Naive thymus-derived CD4-positive, alpha-beta T cell (primary cell): ENCODE measurements at regions of chr2 and their contacts with region 1.

Region 1: GRCh38 chr2:28392297-28393113 is at the start of gene FOSL2:
- DNase-seq: peak; percentile 87 to 98 (median 92)
- ATAC-seq: peak; percentile 85
- H3K4me3 ChIP-seq: peak within 1 kb of the TSS; percentile 92
- H3K4me3 Mint-ChIP-seq: peak within 1 kb of the TSS in 7 of 10 donors; percentile 86 to 99 (median 91)
- H3K27ac ChIP-seq: peak within 1 kb of the TSS; percentile 88
- H3K27ac Mint-ChIP-seq: peak within 1 kb of the TSS in 8 of 9 donors; percentile 92 to 98 (median 98)
- H3K4me1 ChIP-seq: peaks cover 16 to 18% of the 10 kb centered on the region in 2 donors
- H3K4me1 Mint-ChIP-seq: peaks cover 6 to 45% (median 21%) of the 10 kb centered on the region in 7 donors
- H3K27me3 ChIP-seq: no peaks in the 10 kb centered on the region
- H3K27me3 Mint-ChIP-seq: no peaks in the 10 kb centered on the region
- total RNA-seq, gene FOSL2: 0.81 to 251 (median 33.9) TPM

Region 2: GRCh38 chr2:27703638-27704341 is 688.7 kb before region 1 on chr2:
- CTCF ChIA-PET with region 1: interaction called, 3 read pairs
- POLR2A ChIA-PET with region 1: no interaction called
- intact Hi-C with region 1: loop called in 1 of 2 experiments (anchors 1 kb)
- DNase-seq: peak; percentile 59 to 83 (median 77)
- ATAC-seq: peak; percentile 94
- H3K4me3 ChIP-seq: no peak overlapping the region
- H3K4me3 Mint-ChIP-seq: no peak overlapping the region
- H3K27ac ChIP-seq: no peak overlapping the region
- H3K27ac Mint-ChIP-seq: peak overlapping the region in 1 of 9 donors; percentile 36
- H3K4me1 ChIP-seq: no peaks in the 10 kb centered on the region
- H3K4me1 Mint-ChIP-seq: peaks cover 0 to 16% (median 4%) of the 10 kb centered on the region in 7 donors
- H3K27me3 ChIP-seq: no peaks in the 10 kb centered on the region
- H3K27me3 Mint-ChIP-seq: no peaks in the 10 kb centered on the region

Region 3: GRCh38 chr2:27890146-27890923 is 502.2 kb before region 1 on chr2 and contains the starts of genes BABAM2 and RBKS:
- CTCF ChIA-PET with region 1: no interaction called
- POLR2A ChIA-PET with region 1: no interaction called
- intact Hi-C with region 1: loop called (anchors 1 kb)
- DNase-seq: peak; percentile 90 to 96 (median 94)
- ATAC-seq: peak; percentile 92
- H3K4me3 ChIP-seq: peak within 1 kb of the TSS; percentile 95
- H3K4me3 Mint-ChIP-seq: peak within 1 kb of the TSS; percentile 96 to 100 (median 98)
- H3K27ac ChIP-seq: peak within 1 kb of the TSS; percentile 99
- H3K27ac Mint-ChIP-seq: peak within 1 kb of the TSS; percentile 95 to 100 (median 100)
- H3K4me1 ChIP-seq: peaks cover 27 to 30% of the 10 kb centered on the region in 2 donors
- H3K4me1 Mint-ChIP-seq: peaks cover 28 to 60% (median 55%) of the 10 kb centered on the region in 7 donors
- H3K27me3 ChIP-seq: no peaks in the 10 kb centered on the region
- H3K27me3 Mint-ChIP-seq: peaks cover 0 to 3% (median 0%) of the 10 kb centered on the region in 5 donors
- total RNA-seq, gene BABAM2: 34.2 to 55.8 (median 40.3) TPM
- total RNA-seq, gene RBKS: 1.5 to 10.8 (median 2.0) TPM

Region 4: GRCh38 chr2:28366496-28367282 is 25.8 kb before region 1 on chr2:
- CTCF ChIA-PET with region 1: no interaction called
- POLR2A ChIA-PET with region 1: interaction called, 3 read pairs
- intact Hi-C with region 1: loop called (anchors 1 kb)
- DNase-seq: peak in 8 of 9 donors; percentile 37 to 70 (median 56)
- ATAC-seq: peak; percentile 92
- H3K4me3 ChIP-seq: peak overlapping the region; percentile 14
- H3K4me3 Mint-ChIP-seq: peak overlapping the region; percentile 75 to 93 (median 88)
- H3K27ac ChIP-seq: no peak overlapping the region
- H3K27ac Mint-ChIP-seq: peak overlapping the region in 8 of 9 donors; percentile 12 to 87 (median 72)
- H3K4me1 ChIP-seq: peaks cover 44 to 47% of the 10 kb centered on the region in 2 donors
- H3K4me1 Mint-ChIP-seq: peaks cover 27 to 62% (median 45%) of the 10 kb centered on the region in 7 donors
- H3K27me3 ChIP-seq: no peaks in the 10 kb centered on the region
- H3K27me3 Mint-ChIP-seq: peaks cover 0 to 12% (median 0%) of the 10 kb centered on the region in 5 donors

Region 5: DNA sequence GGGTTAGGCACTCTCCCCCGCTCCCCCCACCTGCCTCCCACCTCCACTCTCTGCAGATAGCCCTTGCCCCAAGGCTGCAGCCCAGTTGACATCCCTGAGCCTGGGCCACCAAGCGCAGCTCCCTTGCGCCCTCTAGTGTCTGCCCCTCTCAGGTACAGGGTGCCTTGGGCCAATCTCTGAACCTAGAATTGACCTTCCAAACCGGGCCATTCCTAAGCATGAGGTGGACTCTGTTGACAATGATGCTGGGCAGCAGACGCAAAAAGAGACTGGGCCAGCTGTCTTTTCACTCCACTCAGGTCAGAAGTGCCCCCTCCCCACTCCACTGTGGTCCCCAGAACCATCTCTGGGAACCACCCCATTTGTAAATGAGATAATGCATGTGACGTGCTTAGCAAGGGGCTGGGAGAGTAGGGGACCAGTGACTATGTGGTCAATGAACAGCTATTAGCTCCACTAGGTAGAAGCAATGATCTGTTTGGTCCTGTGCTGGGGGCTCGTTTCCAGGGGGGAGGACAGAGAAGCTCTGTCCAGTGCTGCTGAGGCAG is 60.1 kb after region 1 on chr2:
- CTCF ChIA-PET with region 1: no interaction called
- POLR2A ChIA-PET with region 1: no interaction called
- intact Hi-C with region 1: loop called (anchors 1 kb)
- DNase-seq: peak; percentile 42 to 86 (median 65)
- ATAC-seq: peak; percentile 79
- H3K4me3 ChIP-seq: no peak overlapping the region
- H3K4me3 Mint-ChIP-seq: no peak overlapping the region
- H3K27ac ChIP-seq: no peak overlapping the region
- H3K27ac Mint-ChIP-seq: no peak overlapping the region
- H3K4me1 ChIP-seq: no peaks in the 10 kb centered on the region
- H3K4me1 Mint-ChIP-seq: peaks cover 0 to 44% (median 0%) of the 10 kb centered on the region in 7 donors
- H3K27me3 ChIP-seq: no peaks in the 10 kb centered on the region
- H3K27me3 Mint-ChIP-seq: no peaks in the 10 kb centered on the region

Region 6: DNA sequence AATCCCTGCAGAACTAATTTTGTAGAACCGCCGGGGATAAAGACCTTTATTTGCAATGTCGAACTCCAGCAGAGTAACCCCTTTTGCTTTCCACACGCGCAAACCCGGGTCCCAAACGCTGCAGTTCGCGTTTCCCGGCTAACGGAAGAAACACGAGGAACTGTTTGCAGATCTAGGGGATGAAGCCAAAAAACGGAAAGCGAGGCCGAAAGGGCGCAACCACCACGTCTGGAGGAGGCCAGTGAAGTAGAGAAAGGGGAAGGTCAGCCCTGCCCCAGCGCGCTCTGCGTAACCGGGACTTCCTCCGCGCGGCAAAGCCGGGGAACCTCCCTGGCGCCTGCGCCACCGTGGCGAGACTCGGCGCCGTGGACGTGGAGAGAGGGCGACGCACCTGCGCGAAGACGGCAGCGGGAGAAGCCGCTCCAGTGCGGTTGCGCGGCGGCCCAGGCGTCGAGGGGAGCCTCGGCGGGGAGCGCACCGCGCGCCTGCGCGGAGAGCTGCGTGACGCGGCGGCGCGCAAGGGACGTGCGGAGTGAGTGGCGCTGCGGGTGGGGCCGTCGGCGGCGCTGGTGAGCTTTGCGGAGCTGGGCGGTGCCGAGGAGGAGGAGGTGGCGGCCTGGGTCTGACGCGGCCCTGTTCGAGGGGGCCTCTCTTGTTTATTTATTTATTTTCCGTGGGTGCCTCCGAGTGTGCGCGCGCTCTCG is 358.9 kb after region 1 on chr2 and contains the start of gene PPP1CB:
- CTCF ChIA-PET with region 1: no interaction called
- POLR2A ChIA-PET with region 1: no interaction called
- intact Hi-C with region 1: loop called (anchors 1 to 5 kb)
- DNase-seq: peak; percentile 95 to 99 (median 99)
- ATAC-seq: peak; percentile 92
- H3K4me3 ChIP-seq: peak within 1 kb of the TSS; percentile 97
- H3K4me3 Mint-ChIP-seq: peak within 1 kb of the TSS; percentile 93 to 100 (median 96)
- H3K27ac ChIP-seq: peak within 1 kb of the TSS; percentile 99
- H3K27ac Mint-ChIP-seq: peak within 1 kb of the TSS; percentile 96 to 99 (median 98)
- H3K4me1 ChIP-seq: peaks cover 42 to 44% of the 10 kb centered on the region in 2 donors
- H3K4me1 Mint-ChIP-seq: peaks cover 35 to 67% (median 64%) of the 10 kb centered on the region in 7 donors
- H3K27me3 ChIP-seq: no peaks in the 10 kb centered on the region
- H3K27me3 Mint-ChIP-seq: no peaks in the 10 kb centered on the region
- total RNA-seq, gene PPP1CB: 202 to 223 (median 210) TPM